ENCODE measurements at regions of chr2 and their contacts with region 1.

Region 1: GRCh38 chr2:119264781-119265692 is 41.4 kb downstream of the STEAP3 start:
- DNase-seq: peak in 1 of 2 experiments; percentile 81
- H3K4me3 ChIP-seq: no peak overlapping the region
- H3K27ac ChIP-seq: no peak overlapping the region
- H3K4me1 ChIP-seq: no peaks in the 10 kb centered on the region; a peak in 1 of 7 replicates
- H3K27me3 ChIP-seq: no peaks in the 10 kb centered on the region; a peak in 1 of 7 replicates
- CTCF ChIP-seq: peak; percentile 82 to 99 (median 98)
- EP300 ChIP-seq: no peak
- POLR2A ChIP-seq: no peak
- RAD21 ChIP-seq: peak; percentile 87 to 89

Region 2: GRCh38 chr2:119198240-119198840 is 66.7 kb before region 1 on chr2:
- CTCF ChIA-PET with region 1: interaction called, 11 read pairs
- POLR2A ChIA-PET with region 1: no interaction called
- DNase-seq: no peak
- H3K4me3 ChIP-seq: no peak overlapping the region
- H3K27ac ChIP-seq: no peak overlapping the region
- H3K4me1 ChIP-seq: peaks cover 3 to 14% (median 7%) of the 10 kb centered on the region in 4 experiments; a peak in 5 of 7 replicates
- H3K27me3 ChIP-seq: no peaks in the 10 kb centered on the region; a peak in 1 of 7 replicates
- CTCF ChIP-seq: no peak
- EP300 ChIP-seq: no peak
- POLR2A ChIP-seq: no peak
- RAD21 ChIP-seq: no peak

Region 3: DNA sequence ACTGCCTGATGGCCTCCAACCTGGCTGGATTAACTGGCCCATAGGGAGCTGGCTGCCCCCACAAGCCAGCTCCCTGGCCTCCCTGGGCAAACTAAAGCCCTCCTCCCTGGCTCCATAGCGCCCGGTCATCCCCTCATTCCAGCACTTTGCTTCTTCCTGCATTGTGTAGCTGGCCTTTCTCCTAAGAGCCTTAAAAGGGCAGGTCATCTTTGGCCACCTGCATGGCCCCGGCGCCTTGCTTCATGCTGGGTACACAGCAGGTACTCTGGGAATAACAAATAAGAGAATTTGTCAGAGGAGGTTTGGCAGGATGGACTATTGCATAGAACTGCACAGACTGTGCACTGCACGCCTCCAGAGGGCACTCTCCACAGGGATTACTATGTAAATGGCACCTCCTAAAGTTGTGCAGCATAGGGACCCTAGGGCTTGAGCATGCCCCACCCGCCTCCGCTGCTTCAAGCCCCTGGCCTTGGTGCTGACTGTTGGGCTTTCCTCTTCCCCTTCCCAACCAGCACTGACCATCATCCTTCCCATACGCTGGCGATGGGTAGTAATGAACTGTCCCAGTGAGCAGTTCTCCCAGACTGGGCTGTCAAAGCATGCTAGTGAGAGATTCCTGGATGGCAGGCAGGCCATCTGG is 30.5 kb before region 1 on chr2:
- CTCF ChIA-PET with region 1: interaction called, 36 read pairs
- POLR2A ChIA-PET with region 1: interaction called, 3 read pairs
- DNase-seq: peak in 1 of 2 experiments; percentile 70
- H3K4me3 ChIP-seq: no peak overlapping the region
- H3K27ac ChIP-seq: no peak overlapping the region
- H3K4me1 ChIP-seq: peaks cover 11 to 29% (median 17%) of the 10 kb centered on the region in 4 experiments
- H3K27me3 ChIP-seq: no peaks in the 10 kb centered on the region
- CTCF ChIP-seq: peak; percentile 33 to 61 (median 47)
- EP300 ChIP-seq: no peak
- POLR2A ChIP-seq: no peak
- RAD21 ChIP-seq: peak; percentile 28 to 47

Region 4: DNA sequence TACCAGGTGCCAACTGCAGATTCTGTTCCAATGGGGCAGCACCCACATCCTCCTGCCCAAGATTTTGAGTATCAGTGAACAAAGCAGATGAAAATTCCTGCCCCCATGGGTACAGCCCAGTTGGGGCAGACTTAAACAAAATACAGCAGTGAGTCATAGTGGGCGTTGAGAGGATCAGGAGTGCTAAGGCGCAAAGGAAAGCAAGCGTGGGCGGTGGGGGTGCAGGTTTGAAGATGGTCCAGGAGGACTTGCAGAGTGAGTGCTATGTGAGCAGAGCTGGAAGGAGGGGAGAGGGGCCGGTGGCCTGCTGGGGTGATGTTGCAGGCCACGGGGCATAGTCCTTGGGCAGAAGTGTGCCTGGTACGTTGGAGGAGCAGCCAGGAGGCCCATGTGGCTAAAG is 16.7 kb before region 1 on chr2:
- CTCF ChIA-PET with region 1: interaction called, 57 read pairs
- POLR2A ChIA-PET with region 1: interaction called, 3 read pairs
- DNase-seq: no peak
- H3K4me3 ChIP-seq: no peak overlapping the region
- H3K27ac ChIP-seq: no peak overlapping the region
- H3K4me1 ChIP-seq: peaks cover 0 to 2% (median 0%) of the 10 kb centered on the region in 4 experiments; a peak in 2 of 7 replicates
- H3K27me3 ChIP-seq: no peaks in the 10 kb centered on the region
- CTCF ChIP-seq: no peak
- EP300 ChIP-seq: no peak
- POLR2A ChIP-seq: no peak
- RAD21 ChIP-seq: no peak

Region 5: GRCh38 chr2:119333360-119333759 is 68.3 kb after region 1 on chr2:
- CTCF ChIA-PET with region 1: no interaction called
- POLR2A ChIA-PET with region 1: no interaction called
- DNase-seq: no peak
- H3K4me3 ChIP-seq: no peak overlapping the region
- H3K27ac ChIP-seq: no peak overlapping the region; the same call in 1 of the 2 replicates
- H3K4me1 ChIP-seq: no peaks in the 10 kb centered on the region
- H3K27me3 ChIP-seq: no peaks in the 10 kb centered on the region
- CTCF ChIP-seq: no peak
- EP300 ChIP-seq: no peak
- POLR2A ChIP-seq: no peak
- RAD21 ChIP-seq: no peak